Head of caudate nucleus (tissue), 42 donors: ENCODE measurements at regions of chr6 and their contacts with region 1.

Region 1: DNA sequence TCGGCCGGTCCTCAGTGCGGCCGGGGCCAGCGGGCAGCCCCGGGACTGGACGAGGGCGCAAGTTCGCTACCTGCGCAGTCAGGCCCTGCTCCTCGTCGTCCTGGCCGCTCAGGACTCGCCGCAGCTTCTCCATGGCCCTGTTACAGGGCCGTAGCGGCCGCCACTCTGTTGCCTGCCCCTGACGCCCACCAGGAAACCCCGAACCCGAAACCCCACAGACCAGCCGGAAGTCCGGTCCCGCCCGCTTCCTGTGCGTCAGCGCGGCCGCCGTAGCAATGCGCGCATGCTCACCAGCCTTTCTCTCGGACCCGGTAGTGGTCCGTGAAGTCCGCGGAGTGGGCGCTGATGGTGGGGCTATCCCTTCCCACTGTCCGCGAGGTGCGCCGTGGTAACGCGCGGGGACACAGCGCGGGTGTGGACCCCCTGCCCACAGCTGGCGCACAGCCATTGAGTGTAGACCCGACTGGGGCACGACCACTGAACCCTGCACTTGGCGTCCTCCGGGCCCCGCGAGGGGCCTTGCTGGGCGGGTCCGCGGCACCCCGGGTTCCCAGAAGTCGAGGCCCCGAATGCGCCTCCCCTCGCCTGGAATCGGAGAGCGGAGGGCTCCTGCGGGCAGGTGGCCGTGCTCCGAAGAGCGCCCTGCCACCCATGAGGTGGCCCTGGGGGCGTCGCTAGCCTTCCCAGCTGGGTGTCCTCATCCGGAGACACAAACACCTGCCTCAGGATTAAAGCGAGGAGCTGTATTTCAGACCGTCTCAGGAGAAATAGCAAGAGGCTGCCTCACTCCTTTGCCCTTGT is at the start of gene SFT2D1:
- DNase-seq: peak; percentile 61 to 93 (median 85)

Region 2: DNA sequence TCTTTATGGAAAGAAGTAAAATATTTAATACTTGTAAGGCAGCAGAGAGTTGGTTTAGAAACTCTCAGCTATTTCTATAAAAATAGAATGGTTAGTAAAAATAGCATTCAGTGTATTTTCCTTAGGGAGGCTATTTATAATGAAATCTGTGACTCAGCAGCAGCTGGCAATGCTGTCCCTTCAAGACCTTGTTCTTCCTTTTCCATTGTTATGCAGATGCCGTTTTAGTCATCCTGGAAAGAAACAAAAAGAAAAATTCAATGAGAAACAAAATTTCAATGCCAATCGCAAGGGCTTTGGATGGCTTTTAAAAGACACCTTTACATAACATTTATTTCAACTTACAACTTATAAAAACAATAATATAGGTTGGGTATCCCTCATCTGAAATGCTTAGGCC is 22.7 kb after region 1 on chr6:
- intact Hi-C with region 1: loop called (anchors 2 kb)
- DNase-seq: peak in 17 of 42 donors; percentile 27 to 76 (median 48)

Region 3: GRCh38 chr6:166382933-166383801 is 40.6 kb after region 1 on chr6 and contains the start of gene MPC1:
- intact Hi-C with region 1: loop called (anchors 5 kb)
- DNase-seq: peak; percentile 86 to 99 (median 96)

Region 4: DNA sequence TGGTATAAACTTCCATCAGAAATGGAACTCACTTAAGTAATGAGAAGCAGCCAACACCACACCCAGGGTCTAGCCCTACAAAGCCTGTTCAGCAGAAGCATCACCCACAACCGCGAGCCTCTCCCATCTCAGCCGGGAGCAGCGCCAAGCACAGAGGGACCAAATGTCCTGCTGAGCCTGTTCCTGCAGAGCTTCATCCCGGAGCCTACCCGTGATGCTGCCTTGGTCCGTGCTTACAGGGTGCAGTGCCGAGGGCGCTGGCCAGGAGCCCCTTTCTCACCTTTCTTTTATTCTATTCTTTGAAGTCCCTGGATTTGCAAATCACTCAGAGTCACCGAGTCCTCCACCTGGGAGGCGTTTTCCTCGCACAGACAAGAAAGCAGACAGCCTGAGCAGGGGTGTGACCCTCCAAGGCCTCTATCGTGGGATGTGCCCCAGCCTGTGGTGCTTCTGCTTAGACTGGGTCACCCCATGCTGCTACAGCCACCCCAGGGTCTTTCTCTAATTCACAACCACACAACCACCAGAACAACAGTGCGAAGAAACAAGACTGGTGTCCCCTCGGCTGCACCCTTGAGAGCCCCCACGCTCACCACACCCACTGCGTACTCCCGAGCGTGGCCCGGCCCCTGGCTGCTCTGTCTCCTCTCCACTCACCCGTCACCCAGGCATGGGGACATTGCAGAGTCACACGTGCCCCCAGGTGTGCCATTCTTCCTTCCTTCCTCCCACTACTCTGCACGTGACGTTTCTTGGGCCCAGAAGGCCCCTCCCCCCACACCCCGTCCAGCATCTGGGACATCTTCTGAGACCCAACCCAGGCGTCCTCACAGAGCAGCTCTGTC is 132.4 kb after region 1 on chr6:
- intact Hi-C with region 1: no loop called
- DNase-seq: peak in 5 of 42 donors; percentile 27 to 43 (median 35)